ENCODE measurements at regions of chrX and their contacts with region 1.

Region 1: GRCh38 chrX:101108284-101108683 is 10.3 kb downstream of the CENPI start:
- DNase-seq: no peak
- H3K4me3 ChIP-seq: no peak overlapping the region
- H3K4me3 Mint-ChIP-seq: no peak overlapping the region
- H3K27ac ChIP-seq: no peak overlapping the region
- H3K27ac Mint-ChIP-seq: peak overlapping the region in 1 of 7 donors; percentile 30
- H3K4me1 ChIP-seq: no peaks in the 10 kb centered on the region
- H3K4me1 Mint-ChIP-seq: no peaks in the 10 kb centered on the region
- H3K27me3 ChIP-seq: no peaks in the 10 kb centered on the region
- H3K27me3 Mint-ChIP-seq: peaks cover 0 to 2% (median 0%) of the 10 kb centered on the region in 3 donors
- CTCF ChIP-seq: no peak

Region 2: DNA sequence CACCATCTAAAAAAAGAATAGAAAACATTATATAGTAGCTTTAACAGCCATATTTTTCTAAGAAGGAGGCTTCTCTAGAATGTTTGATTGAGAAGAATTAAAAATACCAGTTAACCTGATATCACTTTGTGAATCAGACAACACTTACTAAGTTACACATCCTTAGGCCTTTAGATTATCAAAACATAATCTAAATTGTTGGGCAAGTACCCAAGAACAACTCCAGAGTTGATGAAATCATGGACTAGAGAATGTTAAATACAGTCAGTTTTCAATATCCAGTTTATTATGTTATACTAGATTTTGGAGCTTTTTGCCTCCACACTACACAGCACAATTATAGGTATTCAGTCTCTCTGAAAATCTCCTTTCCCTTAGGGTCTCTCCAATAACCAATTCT is 99.2 kb before region 1 on chrX:
- intact Hi-C with region 1: no loop called
- DNase-seq: no peak
- H3K4me3 ChIP-seq: no peak overlapping the region
- H3K4me3 Mint-ChIP-seq: no peak overlapping the region
- H3K27ac ChIP-seq: no peak overlapping the region
- H3K27ac Mint-ChIP-seq: no peak overlapping the region
- H3K4me1 ChIP-seq: no peaks in the 10 kb centered on the region
- H3K4me1 Mint-ChIP-seq: no peaks in the 10 kb centered on the region
- H3K27me3 ChIP-seq: no peaks in the 10 kb centered on the region
- H3K27me3 Mint-ChIP-seq: peaks cover 0 to 5% (median 1%) of the 10 kb centered on the region in 3 donors
- CTCF ChIP-seq: no peak

Region 3: DNA sequence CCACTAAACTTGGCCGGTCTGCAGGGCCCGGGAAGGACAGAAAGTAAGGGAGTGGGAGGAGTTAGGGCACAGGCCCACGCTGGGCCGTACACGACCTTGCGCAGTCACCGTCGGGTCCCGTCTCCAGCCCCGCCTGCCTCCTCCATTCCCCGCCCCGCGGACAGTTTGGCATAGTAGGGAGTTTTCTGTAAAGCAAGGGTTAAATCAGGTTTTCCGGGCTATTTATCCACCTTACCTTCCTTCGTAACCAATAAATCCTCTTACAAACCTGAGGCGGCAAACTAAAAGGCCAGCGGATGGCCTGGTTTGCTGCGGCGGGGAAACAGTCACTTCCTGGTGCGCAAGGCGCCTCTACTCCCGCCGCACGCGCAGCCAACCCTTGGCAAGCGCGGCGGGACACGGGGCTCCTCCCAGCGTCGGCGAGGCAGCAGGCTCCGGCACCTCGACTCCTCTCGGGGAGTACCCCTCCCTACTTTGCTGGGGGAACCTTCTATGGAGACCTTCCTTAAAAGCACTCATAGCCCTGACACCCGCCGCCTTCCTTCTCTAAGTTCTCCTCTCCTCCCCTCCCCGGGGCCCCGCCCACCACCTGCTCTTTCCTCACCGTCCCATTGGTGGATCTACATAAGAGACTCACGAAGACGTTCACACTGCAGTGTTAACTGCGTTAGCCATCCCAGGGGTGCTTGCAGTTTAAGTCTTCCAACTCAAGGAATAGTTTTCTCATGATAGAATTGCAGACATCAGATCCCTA is 56.6 kb before region 1 on chrX and contains the start of gene TRMT2B:
- intact Hi-C with region 1: loop called in 1 of 2 experiments (anchors 10 kb)
- DNase-seq: peak; percentile 64 to 69 (median 66)
- H3K4me3 ChIP-seq: peak within 1 kb of the TSS; percentile 66 to 82 (median 78)
- H3K4me3 Mint-ChIP-seq: peak within 1 kb of the TSS; percentile 88 to 93
- H3K27ac ChIP-seq: peak within 1 kb of the TSS; percentile 90 to 92
- H3K27ac Mint-ChIP-seq: peak within 1 kb of the TSS; percentile 92 to 98 (median 95)
- H3K4me1 ChIP-seq: peaks cover 6 to 8% of the 10 kb centered on the region in 2 donors
- H3K4me1 Mint-ChIP-seq: peaks cover 15% of the 10 kb centered on the region
- H3K27me3 ChIP-seq: no peaks in the 10 kb centered on the region
- H3K27me3 Mint-ChIP-seq: no peaks in the 10 kb centered on the region
- CTCF ChIP-seq: no peak
- polyA plus RNA-seq, gene TRMT2B: 10.5 to 13.3 (median 13.0) TPM